HCT116 (cell line): ENCODE measurements at regions of chr5 and their contacts with region 1.

Region 1: GRCh38 chr5:36494756-36495601 is 111.4 kb upstream of the SLC1A3 start:
- DNase-seq: no peak
- ATAC-seq: no peak
- H3K4me3 ChIP-seq: no peak overlapping the region
- H3K27ac ChIP-seq: no peak overlapping the region
- H3K4me1 ChIP-seq: peaks cover 0 to 10% of the 10 kb centered on the region in 2 experiments; a peak in 2 of 4 replicates
- H3K27me3 ChIP-seq: no peaks in the 10 kb centered on the region
- CTCF ChIP-seq: no peak
- POLR2A ChIP-seq: no peak
- RAD21 ChIP-seq: no peak

Region 2: DNA sequence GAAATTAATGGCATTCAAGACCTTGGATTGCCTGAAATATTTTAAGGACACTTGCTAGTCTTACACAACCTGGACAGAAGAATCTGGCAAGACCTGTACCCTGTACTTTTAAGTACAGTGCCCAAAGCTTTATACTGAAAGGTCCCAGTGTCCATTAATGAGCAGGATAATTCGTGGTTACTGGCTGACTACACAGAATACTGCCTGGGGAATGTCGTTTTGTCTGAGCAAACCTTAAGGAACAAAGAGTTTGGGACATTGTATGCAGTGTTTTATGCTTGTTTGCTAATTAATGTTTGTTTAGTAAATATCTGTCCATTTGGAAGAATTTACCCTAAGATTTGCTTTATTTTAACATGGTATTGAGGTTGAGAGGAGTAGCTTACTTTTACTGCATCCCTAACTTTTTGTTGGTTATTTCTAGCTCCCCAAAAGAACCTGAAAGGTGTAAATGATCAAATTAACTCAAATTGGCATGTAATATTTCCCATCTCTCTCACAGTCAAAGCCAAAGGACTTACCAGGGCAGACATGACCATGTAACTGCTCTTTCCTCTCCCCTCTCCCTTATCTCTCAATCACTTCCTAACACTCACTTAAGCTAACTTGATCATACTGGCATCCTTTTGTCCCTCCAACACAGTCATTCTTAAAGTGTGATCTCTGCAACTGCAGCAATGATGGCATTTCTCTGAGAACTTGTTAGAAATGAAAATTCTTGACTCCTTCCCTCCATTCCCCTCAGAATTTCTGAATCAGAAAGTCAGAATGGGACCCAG is 209.0 kb before region 1 on chr5:
- CTCF ChIA-PET with region 1: no interaction called
- POLR2A ChIA-PET with region 1: no interaction called
- RAD21 ChIA-PET with region 1: no interaction called
- intact Hi-C with region 1: loop called (anchors 10 kb)
- DNase-seq: no peak
- ATAC-seq: no peak
- H3K4me3 ChIP-seq: no peak overlapping the region
- H3K27ac ChIP-seq: no peak overlapping the region
- H3K4me1 ChIP-seq: no peaks in the 10 kb centered on the region
- H3K27me3 ChIP-seq: no peaks in the 10 kb centered on the region
- CTCF ChIP-seq: no peak
- POLR2A ChIP-seq: no peak
- RAD21 ChIP-seq: no peak

Region 3: GRCh38 chr5:36422952-36423351 is 72.0 kb before region 1 on chr5:
- CTCF ChIA-PET with region 1: interaction called, 3 read pairs
- POLR2A ChIA-PET with region 1: no interaction called
- RAD21 ChIA-PET with region 1: no interaction called
- intact Hi-C with region 1: loop called (anchors 5 kb)
- DNase-seq: no peak
- ATAC-seq: no peak
- H3K4me3 ChIP-seq: no peak overlapping the region
- H3K27ac ChIP-seq: no peak overlapping the region
- H3K4me1 ChIP-seq: peaks cover 0 to 5% of the 10 kb centered on the region in 2 experiments; a peak in 1 of 4 replicates
- H3K27me3 ChIP-seq: no peaks in the 10 kb centered on the region
- CTCF ChIP-seq: no peak
- POLR2A ChIP-seq: no peak
- RAD21 ChIP-seq: no peak

Region 4: GRCh38 chr5:36699411-36699810 is 204.4 kb after region 1 on chr5:
- CTCF ChIA-PET with region 1: no interaction called
- POLR2A ChIA-PET with region 1: no interaction called
- RAD21 ChIA-PET with region 1: no interaction called
- intact Hi-C with region 1: no loop called
- DNase-seq: no peak
- ATAC-seq: no peak
- H3K4me3 ChIP-seq: no peak overlapping the region
- H3K27ac ChIP-seq: no peak overlapping the region
- H3K4me1 ChIP-seq: peaks cover 0 to 3% of the 10 kb centered on the region in 2 experiments; a peak in 1 of 4 replicates
- H3K27me3 ChIP-seq: no peaks in the 10 kb centered on the region
- CTCF ChIP-seq: no peak
- POLR2A ChIP-seq: no peak
- RAD21 ChIP-seq: no peak